Panc1 (cell line): ENCODE measurements at regions of chr19 and their contacts with region 1.

Region 1: GRCh38 chr19:55325172-55325571 is at the start of gene TMEM150B:
- DNase-seq: no peak
- ATAC-seq: no peak
- H3K4me3 ChIP-seq: no peak within 1 kb of the TSS
- H3K27ac ChIP-seq: no peak within 1 kb of the TSS
- H3K4me1 ChIP-seq: peaks cover 9% of the 10 kb centered on the region; the same call in 1 of the 2 replicates
- H3K27me3 ChIP-seq: no peaks in the 10 kb centered on the region
- CTCF ChIP-seq: no peak
- total RNA-seq, gene TMEM150B: not detected

Region 2: GRCh38 chr19:55111238-55111831 is 213.8 kb before region 1 on chr19:
- CTCF ChIA-PET with region 1: no interaction called
- POLR2A ChIA-PET with region 1: no interaction called
- in situ Hi-C with region 1: no loop called
- intact Hi-C with region 1: no loop called
- DNase-seq: no peak
- ATAC-seq: no peak
- H3K4me3 ChIP-seq: no peak overlapping the region
- H3K27ac ChIP-seq: no peak overlapping the region
- H3K4me1 ChIP-seq: peaks cover 29% of the 10 kb centered on the region
- H3K27me3 ChIP-seq: no peaks in the 10 kb centered on the region
- CTCF ChIP-seq: no peak

Region 3: GRCh38 chr19:55258828-55259539 is 66.2 kb before region 1 on chr19 and contains the start of gene PPP6R1:
- CTCF ChIA-PET with region 1: no interaction called
- POLR2A ChIA-PET with region 1: no interaction called
- in situ Hi-C with region 1: no loop called
- intact Hi-C with region 1: no loop called
- DNase-seq: peak; percentile 100
- ATAC-seq: peak; percentile 91
- H3K4me3 ChIP-seq: peak within 1 kb of the TSS; percentile 81 to 96
- H3K27ac ChIP-seq: peak within 1 kb of the TSS; percentile 99
- H3K4me1 ChIP-seq: peaks cover 37% of the 10 kb centered on the region
- H3K27me3 ChIP-seq: no peaks in the 10 kb centered on the region
- CTCF ChIP-seq: no peak
- total RNA-seq, gene PPP6R1: 172 TPM

Region 4: GRCh38 chr19:55738302-55738701 is 413.1 kb after region 1 on chr19 and contains the start of gene NLRP9:
- CTCF ChIA-PET with region 1: no interaction called
- POLR2A ChIA-PET with region 1: interaction called, 16 read pairs
- in situ Hi-C with region 1: no loop called
- intact Hi-C with region 1: no loop called
- DNase-seq: no peak
- ATAC-seq: no peak
- H3K4me3 ChIP-seq: no peak within 1 kb of the TSS
- H3K27ac ChIP-seq: no peak within 1 kb of the TSS
- H3K4me1 ChIP-seq: no peaks in the 10 kb centered on the region
- H3K27me3 ChIP-seq: peaks cover 3% of the 10 kb centered on the region; the same call in 1 of the 2 replicates
- CTCF ChIP-seq: no peak
- total RNA-seq, gene NLRP9: not detected